ENCODE measurements at regions of chr22 and their contacts with region 1.

Region 1: DNA sequence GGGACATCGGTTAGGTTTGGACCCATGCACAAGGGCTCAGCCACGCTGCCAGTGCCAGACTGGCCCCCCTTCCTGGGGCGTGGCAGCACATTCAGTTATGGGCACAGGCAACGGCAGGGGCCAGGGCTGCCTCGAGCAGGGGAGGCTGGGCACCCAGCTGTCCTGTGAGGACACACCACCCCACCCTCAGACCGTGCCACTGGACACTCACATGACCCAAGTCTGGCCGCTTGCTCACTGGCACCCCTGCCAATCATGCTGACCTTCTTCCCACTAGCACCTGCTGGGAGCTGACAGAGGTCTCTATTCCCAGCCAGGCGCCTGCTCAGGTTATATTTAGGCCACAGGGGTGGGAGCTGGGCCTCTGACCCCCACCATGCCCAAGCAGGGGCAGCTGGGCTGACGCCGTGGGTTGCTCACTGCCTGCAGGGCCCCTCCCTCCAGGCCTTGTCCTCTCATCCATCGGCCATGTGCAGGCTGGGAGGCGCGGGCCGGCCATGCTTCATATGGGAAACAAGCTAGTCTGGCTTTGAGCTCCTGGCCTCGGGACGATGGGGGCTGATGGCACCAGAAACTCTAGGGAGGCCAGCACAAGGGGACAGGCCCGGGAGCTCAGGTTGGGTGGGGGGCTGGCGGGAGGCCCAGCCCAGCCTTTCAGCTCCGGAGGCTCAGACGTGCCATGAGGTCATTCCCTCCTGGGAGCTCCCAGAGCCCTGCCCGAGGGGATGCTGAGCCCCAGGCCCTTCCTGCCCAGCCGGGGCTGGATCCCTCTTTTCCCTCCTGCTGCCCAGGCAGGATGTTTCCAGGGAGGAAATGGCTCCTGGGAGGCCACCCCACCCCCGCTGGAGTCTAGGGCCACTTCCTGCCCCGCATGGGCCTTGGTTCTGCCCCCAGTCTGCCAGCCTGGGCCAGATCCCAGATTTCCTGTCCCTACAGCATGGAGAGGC is 15.2 kb upstream of the TBX1 start:
- DNase-seq: no peak
- ATAC-seq: no peak
- H3K4me3 ChIP-seq: no peak overlapping the region
- H3K27ac ChIP-seq: no peak overlapping the region
- H3K4me1 ChIP-seq: no peaks in the 10 kb centered on the region
- H3K27me3 ChIP-seq: no peaks in the 10 kb centered on the region

Region 2: DNA sequence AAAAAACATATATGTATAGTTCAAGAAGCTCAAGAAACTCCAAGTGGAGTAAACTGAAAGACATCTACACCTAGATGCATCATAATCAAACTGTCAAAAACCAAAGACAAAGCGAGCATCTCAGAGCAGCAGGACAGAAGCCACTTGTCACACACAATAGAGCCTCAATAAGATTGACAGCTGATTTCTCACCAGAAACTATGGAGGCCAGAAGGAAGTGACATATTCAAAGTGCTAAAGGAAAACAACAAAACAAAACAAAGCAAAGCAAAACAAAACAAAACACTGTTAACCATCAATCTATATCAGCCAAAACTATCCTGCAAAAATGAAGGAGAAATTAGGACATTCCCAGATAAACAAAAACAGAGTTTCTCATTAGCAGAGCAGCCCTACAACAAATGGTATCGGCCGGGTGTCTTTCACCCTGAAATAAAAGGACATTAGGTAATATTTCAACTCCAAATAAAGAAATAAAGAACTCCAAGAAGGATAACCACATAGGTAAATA is 97.0 kb before region 1 on chr22:
- intact Hi-C with region 1: no loop called
- DNase-seq: no peak
- ATAC-seq: no peak
- H3K4me3 ChIP-seq: no peak overlapping the region
- H3K27ac ChIP-seq: no peak overlapping the region
- H3K4me1 ChIP-seq: no peaks in the 10 kb centered on the region
- H3K27me3 ChIP-seq: no peaks in the 10 kb centered on the region

Region 3: DNA sequence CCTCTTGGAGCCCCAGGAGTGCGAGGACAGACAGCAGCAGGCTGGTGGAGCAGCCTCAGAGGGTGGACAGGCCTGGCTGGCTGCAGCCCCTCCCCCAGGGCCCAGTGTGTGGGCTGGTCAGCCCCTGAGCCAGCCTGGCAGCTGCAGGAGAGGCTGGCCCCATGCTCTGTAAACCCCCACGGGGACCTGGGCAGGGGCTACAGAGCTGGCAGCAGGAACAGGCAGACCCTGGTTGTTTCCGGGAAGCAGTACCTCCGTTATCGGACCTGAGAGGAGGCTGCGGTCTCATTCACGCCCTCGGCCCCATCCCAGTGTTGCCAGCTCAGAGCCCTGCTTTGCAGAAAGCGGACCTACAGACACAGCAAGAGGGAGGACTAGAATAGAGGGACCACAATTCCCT is 157.6 kb after region 1 on chr22:
- intact Hi-C with region 1: loop called in 1 of 2 experiments (anchors 5 kb)
- DNase-seq: no peak
- ATAC-seq: no peak
- H3K4me3 ChIP-seq: no peak overlapping the region
- H3K27ac ChIP-seq: no peak overlapping the region
- H3K4me1 ChIP-seq: no peaks in the 10 kb centered on the region
- H3K27me3 ChIP-seq: no peaks in the 10 kb centered on the region

Measured in aorta (tissue), 5 donors.